HAP-1 (cell line): ENCODE measurements at regions of chr11 and their contacts with region 1.

Region 1: DNA sequence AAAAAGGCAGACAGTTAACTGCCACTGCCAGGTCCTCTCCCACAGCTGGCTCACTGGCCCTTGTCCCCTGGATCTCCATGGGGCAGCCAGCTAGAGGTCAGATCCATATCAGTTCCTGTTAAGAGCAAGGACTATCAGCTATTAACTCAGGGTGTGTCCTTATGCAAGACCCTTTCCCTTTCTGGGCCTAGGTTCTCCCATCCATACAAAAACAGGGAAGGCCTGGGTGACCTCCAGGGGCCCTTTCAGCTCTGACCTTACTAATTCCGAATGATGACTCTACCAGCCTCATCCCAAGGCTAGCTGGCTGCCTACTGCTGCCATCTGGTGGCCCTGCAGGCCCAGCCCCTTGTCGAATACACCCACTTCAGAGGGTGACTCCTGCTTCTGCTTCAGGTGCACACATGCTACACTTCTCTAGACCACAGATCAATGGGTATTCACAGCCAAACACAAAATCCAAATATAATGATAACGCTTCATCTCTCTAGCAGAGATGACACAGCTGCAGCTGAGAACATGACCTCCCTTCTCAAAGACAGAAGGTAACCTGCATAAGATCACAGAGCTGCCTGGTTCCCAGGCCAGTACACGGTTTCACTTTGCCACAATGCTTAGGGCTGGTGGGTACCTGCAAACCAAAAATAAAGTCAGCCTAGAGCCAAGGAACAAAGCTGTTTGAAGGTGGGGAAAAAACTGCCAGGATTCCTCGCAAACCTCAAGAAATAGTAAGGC is 34.1 kb downstream of the SERGEF start:
- DNase-seq: peak in 1 of 2 experiments; percentile 66
- H3K4me3 ChIP-seq: no peak overlapping the region
- H3K4me1 ChIP-seq: no peaks in the 10 kb centered on the region
- H3K27me3 ChIP-seq: no peaks in the 10 kb centered on the region

Region 2: GRCh38 chr11:17598700-17599459 is 379.8 kb before region 1 on chr11:
- in situ Hi-C with region 1: loop called (anchors 5 kb)
- DNase-seq: peak; percentile 49 to 88
- H3K4me3 ChIP-seq: no peak overlapping the region
- H3K4me1 ChIP-seq: no peaks in the 10 kb centered on the region
- H3K27me3 ChIP-seq: no peaks in the 10 kb centered on the region

Region 3: GRCh38 chr11:17722000-17722643 is 256.6 kb before region 1 on chr11:
- in situ Hi-C with region 1: loop called (anchors 10 kb)
- DNase-seq: no peak
- H3K4me3 ChIP-seq: no peak overlapping the region
- H3K4me1 ChIP-seq: no peaks in the 10 kb centered on the region
- H3K27me3 ChIP-seq: peaks cover 34% of the 10 kb centered on the region

Region 4: GRCh38 chr11:17760102-17761029 is 218.4 kb before region 1 on chr11:
- in situ Hi-C with region 1: loop called (anchors 10 kb)
- DNase-seq: peak; percentile 20 to 71
- H3K4me3 ChIP-seq: no peak overlapping the region
- H3K4me1 ChIP-seq: no peaks in the 10 kb centered on the region
- H3K27me3 ChIP-seq: no peaks in the 10 kb centered on the region

Region 5: GRCh38 chr11:18395735-18396504 is 417.2 kb after region 1 on chr11:
- in situ Hi-C with region 1: no loop called
- DNase-seq: peak; percentile 99
- H3K4me3 ChIP-seq: peak overlapping the region; percentile 90
- H3K4me1 ChIP-seq: peaks cover 12% of the 10 kb centered on the region
- H3K27me3 ChIP-seq: no peaks in the 10 kb centered on the region